ENCODE measurements at regions of chr12 and their contacts with region 1.

Region 1: DNA sequence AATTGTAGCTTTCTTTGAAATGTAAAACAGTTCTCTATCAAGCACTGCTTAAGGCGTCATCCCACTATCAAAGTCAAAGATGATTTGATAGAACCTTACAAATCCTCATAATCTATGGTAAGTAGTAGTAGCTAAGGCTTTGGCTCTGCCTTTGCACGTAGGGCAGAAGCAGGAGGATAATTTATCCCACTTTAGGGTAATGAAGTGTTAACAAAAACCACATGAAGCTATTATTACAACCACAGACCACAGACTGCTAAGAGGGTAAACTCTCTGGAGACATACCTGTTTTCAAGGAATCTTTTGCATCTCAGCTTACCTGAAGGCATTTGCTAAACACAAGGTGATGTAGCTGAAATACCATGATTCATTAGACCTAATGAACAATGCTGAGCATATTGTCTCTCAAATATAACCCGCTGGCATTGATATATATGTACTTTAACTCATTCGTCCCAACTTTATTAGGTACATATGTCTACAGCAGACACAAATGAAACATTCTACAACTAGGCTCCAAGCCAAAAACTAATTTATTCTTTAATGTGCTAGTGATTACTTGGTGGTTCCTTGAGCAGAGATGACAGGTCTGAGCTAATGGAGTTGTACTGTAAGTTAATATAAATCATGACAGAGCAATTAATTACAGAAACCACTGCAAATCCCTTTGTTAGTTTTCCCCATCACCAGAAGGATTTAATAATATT is 368.8 kb downstream of the ETNK1 start:
- DNase-seq: no peak
- ATAC-seq: no peak
- H3K4me3 ChIP-seq: no peak overlapping the region
- H3K27ac ChIP-seq: no peak overlapping the region
- H3K4me1 ChIP-seq: no peaks in the 10 kb centered on the region
- H3K27me3 ChIP-seq: no peaks in the 10 kb centered on the region
- CTCF ChIP-seq: no peak

Region 2: DNA sequence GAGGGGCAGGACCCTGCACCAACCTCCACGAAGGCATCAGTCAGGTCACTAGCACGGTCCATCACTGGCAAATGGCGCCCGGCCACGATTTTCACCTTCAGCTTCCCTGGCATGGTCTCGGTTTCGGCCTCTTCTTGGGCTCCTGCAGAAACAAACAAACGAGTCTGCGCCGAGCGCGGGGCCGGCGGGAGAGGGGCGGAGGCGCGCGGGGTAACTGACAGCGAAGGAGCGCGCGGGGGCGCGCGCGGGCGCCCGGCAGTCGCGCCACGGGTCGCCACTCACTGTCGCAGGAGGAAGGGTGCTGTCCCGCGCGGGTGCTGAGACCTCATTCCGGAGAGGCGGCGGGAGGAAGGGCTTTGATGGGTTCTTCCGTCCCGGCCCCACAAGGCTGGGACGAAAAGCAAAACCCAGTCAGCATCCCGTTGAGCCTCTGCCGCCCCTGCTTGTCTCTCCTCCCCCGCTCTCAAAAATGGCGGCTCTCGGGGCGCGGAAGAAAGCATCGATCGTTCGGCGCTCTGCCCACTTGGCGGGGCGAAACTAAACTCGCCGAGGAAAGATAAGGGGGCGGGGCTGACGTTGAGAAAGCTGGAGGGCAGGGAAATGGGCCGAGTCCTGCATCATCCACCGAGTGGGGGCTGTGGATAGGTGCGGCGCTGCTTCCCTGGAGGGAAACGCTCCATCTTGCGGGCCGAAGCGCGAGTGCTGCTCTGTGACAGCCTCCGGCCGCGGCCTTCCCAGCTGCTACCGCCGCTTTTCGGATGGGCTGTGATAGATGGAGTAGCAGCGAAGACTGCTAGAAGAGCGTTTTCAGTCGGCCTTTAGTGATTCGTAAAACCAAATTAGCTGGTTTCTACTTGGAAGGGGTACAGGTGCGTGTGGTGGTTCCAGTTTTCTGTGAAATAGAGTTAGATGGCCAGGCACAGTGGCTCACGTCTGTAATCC is 449.5 kb before region 1 on chr12 and contains the start of gene C2CD5:
- CTCF ChIA-PET with region 1: no interaction called
- POLR2A ChIA-PET with region 1: no interaction called
- in situ Hi-C with region 1: no loop called
- intact Hi-C with region 1: no loop called
- DNase-seq: peak; percentile 69
- ATAC-seq: peak; percentile 96
- H3K4me3 ChIP-seq: peak within 1 kb of the TSS; percentile 64 to 73
- H3K27ac ChIP-seq: peak within 1 kb of the TSS; percentile 84
- H3K4me1 ChIP-seq: no peaks in the 10 kb centered on the region
- H3K27me3 ChIP-seq: no peaks in the 10 kb centered on the region
- CTCF ChIP-seq: peak; percentile 55
- total RNA-seq, gene C2CD5: 15.9 TPM

Region 3: GRCh38 chr12:22755629-22756028 is 238.1 kb before region 1 on chr12:
- CTCF ChIA-PET with region 1: no interaction called
- POLR2A ChIA-PET with region 1: no interaction called
- in situ Hi-C with region 1: no loop called
- intact Hi-C with region 1: no loop called
- DNase-seq: no peak
- ATAC-seq: no peak
- H3K4me3 ChIP-seq: no peak overlapping the region
- H3K27ac ChIP-seq: no peak overlapping the region
- H3K4me1 ChIP-seq: no peaks in the 10 kb centered on the region
- H3K27me3 ChIP-seq: no peaks in the 10 kb centered on the region
- CTCF ChIP-seq: no peak

Region 4: DNA sequence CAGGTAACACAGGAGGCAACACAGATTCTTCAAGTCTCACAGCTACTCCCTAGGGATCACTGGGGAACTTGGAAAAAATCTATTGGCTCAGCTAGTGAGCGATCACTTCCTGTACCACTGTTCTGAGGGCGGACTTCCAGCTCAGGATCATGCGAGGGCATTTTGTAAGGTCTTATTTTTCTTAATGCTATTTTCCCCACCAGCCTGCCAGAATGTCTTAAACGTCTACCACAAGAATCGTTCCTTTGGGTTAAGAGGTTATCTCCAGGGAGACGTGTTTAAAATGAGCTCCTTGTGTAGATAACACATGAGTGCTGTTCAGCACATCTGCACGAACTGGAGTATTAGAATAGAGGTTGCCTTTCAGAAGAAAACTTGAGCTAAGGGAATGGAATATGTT is 206.2 kb before region 1 on chr12:
- CTCF ChIA-PET with region 1: no interaction called
- POLR2A ChIA-PET with region 1: no interaction called
- in situ Hi-C with region 1: no loop called
- intact Hi-C with region 1: no loop called
- DNase-seq: no peak
- ATAC-seq: no peak
- H3K4me3 ChIP-seq: no peak overlapping the region
- H3K27ac ChIP-seq: no peak overlapping the region
- H3K4me1 ChIP-seq: no peaks in the 10 kb centered on the region
- H3K27me3 ChIP-seq: no peaks in the 10 kb centered on the region
- CTCF ChIP-seq: no peak

Region 5: DNA sequence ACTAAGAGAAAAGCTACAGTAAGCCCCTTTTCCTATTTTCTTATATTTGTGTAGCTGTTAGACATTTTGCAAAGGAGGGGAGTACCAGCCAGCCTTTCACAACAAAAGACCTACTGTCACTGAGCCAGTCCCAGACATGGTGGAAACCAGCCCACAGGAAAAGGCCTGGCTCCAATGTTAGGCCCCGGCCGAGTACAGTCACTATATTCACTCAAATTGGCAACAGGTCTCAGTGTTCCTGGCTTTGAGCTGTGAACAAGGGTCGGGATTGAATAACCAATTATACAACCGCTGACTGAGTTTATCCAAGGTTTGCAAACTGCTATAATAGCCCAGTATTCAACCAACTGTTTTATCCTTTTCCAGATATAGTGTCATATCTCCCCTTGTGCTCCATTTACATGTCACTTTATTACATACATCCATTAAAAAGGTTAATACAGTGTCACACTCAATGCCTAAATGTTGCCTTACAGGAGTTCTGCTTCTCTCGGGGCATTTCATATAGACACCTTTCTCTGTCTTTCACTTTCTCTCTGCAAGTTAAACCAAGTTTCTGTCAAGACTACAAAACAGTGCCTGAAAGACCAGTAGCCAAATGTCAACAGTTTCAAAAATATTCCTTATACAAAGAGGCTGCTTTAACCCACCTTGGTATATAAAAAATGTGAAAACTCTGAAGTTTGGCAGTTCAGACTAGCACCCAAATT is 777.6 kb after region 1 on chr12:
- CTCF ChIA-PET with region 1: no interaction called
- POLR2A ChIA-PET with region 1: interaction called, 13 read pairs
- in situ Hi-C with region 1: no loop called
- intact Hi-C with region 1: no loop called
- DNase-seq: no peak
- ATAC-seq: no peak
- H3K4me3 ChIP-seq: no peak overlapping the region
- H3K27ac ChIP-seq: no peak overlapping the region
- H3K4me1 ChIP-seq: no peaks in the 10 kb centered on the region
- H3K27me3 ChIP-seq: no peaks in the 10 kb centered on the region
- CTCF ChIP-seq: no peak

Measured in Panc1 (cell line).